ENCODE measurements at regions of chr20 and their contacts with region 1.

Region 1: DNA sequence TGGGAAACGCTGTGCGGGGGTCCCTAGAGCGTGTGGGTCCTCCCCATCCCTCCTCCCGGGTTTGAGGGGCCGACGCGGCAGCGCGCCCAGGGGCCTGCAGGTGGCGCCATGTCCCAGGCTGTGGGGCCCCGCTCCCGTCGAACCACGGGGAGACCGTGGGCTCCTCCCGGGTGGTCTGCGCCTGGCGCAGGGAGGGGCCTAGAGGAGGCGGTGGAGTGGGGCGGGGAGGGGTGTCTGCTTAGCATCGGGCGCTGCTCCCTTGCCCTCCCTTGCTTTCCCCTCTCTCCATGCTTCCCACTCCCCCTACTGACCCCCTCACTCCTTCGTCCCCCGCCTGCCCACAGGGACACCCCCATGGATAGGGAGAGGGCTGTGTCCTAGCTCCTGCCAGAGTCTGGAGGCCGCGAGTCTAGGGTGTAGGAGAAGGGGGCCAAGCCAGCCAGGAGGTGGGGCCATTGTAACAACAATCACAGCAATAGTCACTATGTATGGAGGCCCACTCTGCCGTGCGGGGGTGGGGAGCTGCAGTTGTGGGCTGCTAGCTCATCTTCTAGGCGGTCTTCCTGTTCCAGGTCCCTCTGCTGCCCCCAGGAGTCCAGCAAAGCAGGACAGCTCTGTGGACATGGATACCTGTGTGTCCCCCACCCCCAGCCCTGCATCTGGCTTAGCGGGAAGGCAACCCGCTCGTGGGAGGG is 51.7 kb downstream of the CHMP4B start:
- DNase-seq: peak; percentile 65
- H3K4me3 ChIP-seq: peak overlapping the region in 1 of 3 experiments; percentile 7
- H3K27ac ChIP-seq: no peak overlapping the region
- H3K4me1 ChIP-seq: peaks cover 23% of the 10 kb centered on the region
- H3K27me3 ChIP-seq: peaks cover 0 to 4% of the 10 kb centered on the region in 2 experiments
- CTCF ChIP-seq: peak; percentile 74 to 89
- POLR2A ChIP-seq: no peak

Region 2: DNA sequence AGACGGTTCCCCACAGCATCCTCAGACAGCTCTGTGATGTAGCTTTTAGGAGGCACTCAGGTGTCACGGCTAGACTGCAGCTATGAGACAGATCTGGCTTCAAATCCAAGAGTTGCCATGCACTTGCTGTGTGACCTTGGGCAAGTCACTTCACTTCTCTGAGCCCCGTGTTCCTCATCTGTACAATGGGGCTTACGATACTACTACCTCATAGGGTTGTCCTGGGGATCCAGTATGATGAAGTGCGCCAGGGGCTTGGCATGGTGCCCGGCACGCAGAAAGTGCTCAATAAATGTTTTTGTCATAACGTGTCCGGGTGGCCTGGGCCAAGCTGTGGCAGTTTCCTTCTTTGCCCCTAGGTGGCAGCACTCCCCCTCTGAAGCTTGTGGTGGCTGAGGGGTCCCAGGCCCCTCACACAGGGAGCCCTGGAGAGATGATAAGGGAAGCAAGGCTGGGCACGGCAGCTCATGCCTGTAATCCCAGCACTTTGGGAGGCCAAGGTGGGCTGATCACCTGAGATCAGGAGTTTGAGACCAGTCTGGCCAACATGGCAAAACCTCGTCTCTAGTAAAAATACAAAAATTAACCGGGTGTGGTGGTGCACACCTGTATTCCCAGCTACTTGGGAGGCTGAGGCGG is 70.8 kb before region 1 on chr20:
- CTCF ChIA-PET with region 1: interaction called, 51 read pairs
- POLR2A ChIA-PET with region 1: interaction called, 4 read pairs
- dilution Hi-C with region 1: no loop called
- intact Hi-C with region 1: loop called (anchors 1 kb)
- DNase-seq: peak; percentile 61
- H3K4me3 ChIP-seq: no peak overlapping the region
- H3K27ac ChIP-seq: no peak overlapping the region
- H3K4me1 ChIP-seq: peaks cover 44% of the 10 kb centered on the region
- H3K27me3 ChIP-seq: no peaks in the 10 kb centered on the region
- CTCF ChIP-seq: peak; percentile 79 to 80
- POLR2A ChIP-seq: no peak

Region 3: DNA sequence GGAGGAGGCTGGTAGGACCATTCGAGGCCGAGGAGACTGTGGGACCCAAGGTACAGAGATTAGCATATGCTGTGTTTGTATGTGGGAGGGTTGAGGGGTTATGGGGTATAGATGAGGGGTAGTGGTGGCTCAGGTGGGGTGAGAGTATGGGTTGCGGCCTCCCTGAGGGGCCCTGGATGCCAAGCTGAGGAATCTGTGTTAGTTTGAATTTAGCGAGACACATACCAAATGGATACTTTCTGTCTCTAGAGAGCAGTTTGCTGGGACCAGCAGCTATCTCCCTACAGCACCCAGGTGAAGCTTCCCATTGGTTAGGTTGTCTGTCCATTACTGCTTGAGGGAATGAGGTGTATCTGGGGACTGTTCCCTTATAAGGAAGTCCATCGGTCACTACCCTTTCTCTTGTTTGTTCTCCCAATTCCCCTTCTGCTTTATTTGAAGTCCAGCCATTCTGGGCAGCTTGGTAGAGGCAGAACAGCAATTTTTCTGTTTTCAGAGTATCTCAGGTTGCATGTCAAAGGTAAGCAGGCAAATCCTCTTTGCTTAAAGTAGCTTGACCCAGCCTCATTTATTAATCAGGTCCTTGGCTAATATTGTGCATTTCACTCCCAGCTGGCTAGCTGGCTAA is 36.5 kb before region 1 on chr20:
- CTCF ChIA-PET with region 1: interaction called, 10 read pairs
- POLR2A ChIA-PET with region 1: no interaction called
- dilution Hi-C with region 1: no loop called
- intact Hi-C with region 1: no loop called
- DNase-seq: no peak
- H3K4me3 ChIP-seq: no peak overlapping the region
- H3K27ac ChIP-seq: no peak overlapping the region
- H3K4me1 ChIP-seq: peaks cover under 1% of the 10 kb centered on the region
- H3K27me3 ChIP-seq: no peaks in the 10 kb centered on the region
- CTCF ChIP-seq: no peak
- POLR2A ChIP-seq: no peak

Region 4: GRCh38 chr20:33915726-33916331 is 53.0 kb after region 1 on chr20:
- CTCF ChIA-PET with region 1: interaction called, 12 read pairs
- POLR2A ChIA-PET with region 1: no interaction called
- dilution Hi-C with region 1: no loop called
- intact Hi-C with region 1: loop called (anchors 1 kb)
- DNase-seq: no peak
- H3K4me3 ChIP-seq: no peak overlapping the region
- H3K27ac ChIP-seq: no peak overlapping the region
- H3K4me1 ChIP-seq: peaks cover 16% of the 10 kb centered on the region
- H3K27me3 ChIP-seq: peaks cover 0 to 2% of the 10 kb centered on the region in 2 experiments
- CTCF ChIP-seq: peak; percentile 47 to 55
- POLR2A ChIP-seq: no peak

Region 5: DNA sequence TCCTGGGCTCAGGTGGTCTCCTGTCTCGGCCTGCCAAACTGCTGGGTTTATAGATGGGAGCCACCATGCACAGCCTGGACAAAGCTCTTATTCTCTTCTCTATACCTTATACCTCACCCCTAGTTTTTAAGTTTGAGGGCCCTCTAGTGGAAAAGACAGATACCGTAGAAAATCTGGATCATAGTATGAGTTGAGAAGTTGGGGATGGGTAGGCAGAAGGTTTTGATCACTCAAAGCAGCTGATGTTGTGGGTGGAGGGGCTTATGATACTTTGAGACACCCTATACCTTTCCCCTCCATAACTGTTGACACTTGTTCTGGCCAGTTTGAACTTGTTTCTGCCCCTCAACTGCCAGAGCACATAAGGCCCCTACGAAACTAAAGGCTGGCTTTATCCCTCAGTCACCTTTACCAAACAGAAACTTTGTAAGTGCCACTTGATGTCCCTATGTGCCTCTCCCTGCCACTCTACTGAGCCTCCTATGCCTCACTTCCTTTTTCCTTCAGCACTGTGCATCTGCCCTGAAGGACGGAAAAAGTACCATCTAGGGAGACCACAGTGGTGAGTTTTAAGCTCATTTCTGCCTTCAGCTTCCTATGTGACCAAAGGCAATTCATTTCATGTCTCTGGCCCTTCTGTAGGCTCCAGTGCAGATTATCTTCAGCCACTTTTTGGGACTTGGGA is 159.4 kb after region 1 on chr20:
- CTCF ChIA-PET with region 1: interaction called, 27 read pairs
- POLR2A ChIA-PET with region 1: no interaction called
- dilution Hi-C with region 1: no loop called
- intact Hi-C with region 1: no loop called
- DNase-seq: peak; percentile 35
- H3K4me3 ChIP-seq: no peak overlapping the region
- H3K27ac ChIP-seq: no peak overlapping the region
- H3K4me1 ChIP-seq: no peaks in the 10 kb centered on the region
- H3K27me3 ChIP-seq: no peaks in the 10 kb centered on the region
- CTCF ChIP-seq: peak; percentile 17 to 33
- POLR2A ChIP-seq: no peak

Region 6: DNA sequence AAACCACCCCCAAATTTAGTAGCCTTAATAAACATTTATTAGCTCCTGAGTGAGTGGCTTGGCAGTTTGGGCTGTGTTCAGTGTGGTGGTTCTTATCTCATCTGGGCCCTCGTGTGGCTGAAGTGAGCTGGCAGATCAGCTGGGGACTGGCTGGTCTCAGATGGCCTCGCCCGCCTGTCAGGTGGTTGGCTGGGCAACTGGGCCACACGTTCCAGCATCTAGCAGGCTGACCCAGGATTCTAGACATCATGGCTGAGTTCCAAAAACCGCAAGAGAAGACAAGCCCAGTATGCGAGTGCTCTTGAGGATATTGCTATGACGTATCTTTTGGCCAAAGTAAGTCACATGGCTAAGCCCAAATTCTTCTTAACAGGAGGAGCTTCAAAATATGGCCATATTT is 220.3 kb after region 1 on chr20:
- CTCF ChIA-PET with region 1: interaction called, 13 read pairs
- POLR2A ChIA-PET with region 1: no interaction called
- dilution Hi-C with region 1: no loop called
- intact Hi-C with region 1: no loop called
- DNase-seq: peak; percentile 32
- H3K4me3 ChIP-seq: no peak overlapping the region
- H3K27ac ChIP-seq: no peak overlapping the region
- H3K4me1 ChIP-seq: no peaks in the 10 kb centered on the region
- H3K27me3 ChIP-seq: no peaks in the 10 kb centered on the region
- CTCF ChIP-seq: no peak
- POLR2A ChIP-seq: no peak

Region 7: DNA sequence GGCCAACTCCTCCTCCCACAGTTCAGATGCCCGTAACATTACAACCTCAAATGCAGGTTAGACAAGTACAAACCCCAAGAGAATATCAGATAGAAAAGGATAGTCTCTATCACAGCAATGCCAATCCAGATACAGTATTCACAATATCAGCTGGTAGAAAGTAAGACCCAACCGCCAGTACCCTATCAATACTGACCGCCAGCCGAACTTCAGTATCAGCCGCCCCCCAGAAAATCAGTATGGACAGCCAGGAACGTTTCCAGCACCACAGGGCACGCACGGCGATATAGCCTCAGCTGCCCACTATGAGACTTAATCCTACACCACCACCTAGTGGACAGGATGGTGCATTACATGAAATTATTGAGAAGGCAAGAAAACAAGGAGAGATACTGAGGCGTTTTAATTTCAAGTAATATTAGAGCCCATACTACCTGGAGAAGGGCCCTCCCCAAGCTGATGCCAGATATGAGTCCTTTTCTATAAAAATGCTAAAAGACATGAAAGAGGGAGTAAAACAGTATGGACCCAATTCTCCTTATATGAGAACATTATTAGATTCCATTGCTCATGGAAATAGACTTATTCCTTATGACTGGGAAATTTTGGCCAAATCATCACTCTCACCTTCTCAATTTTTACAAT is 266.8 kb after region 1 on chr20:
- CTCF ChIA-PET with region 1: interaction called, 30 read pairs
- POLR2A ChIA-PET with region 1: no interaction called
- dilution Hi-C with region 1: no loop called
- intact Hi-C with region 1: loop called (anchors 1 kb)
- DNase-seq: peak; percentile 78
- H3K4me3 ChIP-seq: no peak overlapping the region
- H3K27ac ChIP-seq: no peak overlapping the region
- H3K4me1 ChIP-seq: peaks cover 3% of the 10 kb centered on the region
- H3K27me3 ChIP-seq: no peaks in the 10 kb centered on the region
- CTCF ChIP-seq: peak; percentile 61 to 76
- POLR2A ChIP-seq: no peak